GM12878 (cell line): ENCODE measurements at regions of chr2 and their contacts with region 1.

Region 1: DNA sequence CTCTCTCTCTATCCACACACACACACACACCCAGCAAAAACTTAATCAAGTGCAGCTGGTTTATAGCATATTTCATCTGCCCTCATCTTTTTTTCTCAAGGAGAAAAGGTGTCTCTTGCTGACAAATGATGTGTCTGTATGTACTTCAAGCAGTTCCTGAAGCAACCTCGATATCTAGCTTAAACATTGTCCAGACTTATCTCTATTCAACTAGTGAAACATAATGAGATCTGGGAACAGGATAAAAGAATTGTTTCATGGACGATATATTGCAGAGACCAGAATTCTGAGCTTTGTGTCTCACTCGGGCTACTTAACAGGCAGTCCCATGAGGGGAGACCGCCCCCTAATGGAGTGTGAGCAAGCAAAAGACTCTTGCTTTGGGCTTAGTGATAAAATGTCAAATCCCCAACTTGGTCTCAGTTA is 929.2 kb upstream of the SOX11 start:
- DNase-seq: no peak
- ATAC-seq: no peak
- H3K4me3 ChIP-seq: no peak overlapping the region
- H3K27ac ChIP-seq: no peak overlapping the region
- H3K4me1 ChIP-seq: no peaks in the 10 kb centered on the region
- H3K27me3 ChIP-seq: no peaks in the 10 kb centered on the region
- CTCF ChIP-seq: peak in 2 of 3 experiments; percentile 29 to 43; a peak in 3 of 6 replicates
- EP300 ChIP-seq: no peak
- POLR2A ChIP-seq: no peak
- RAD21 ChIP-seq: 0 out of 2 replicates have a peak, but pooled peaks have one; percentile 20

Region 2: DNA sequence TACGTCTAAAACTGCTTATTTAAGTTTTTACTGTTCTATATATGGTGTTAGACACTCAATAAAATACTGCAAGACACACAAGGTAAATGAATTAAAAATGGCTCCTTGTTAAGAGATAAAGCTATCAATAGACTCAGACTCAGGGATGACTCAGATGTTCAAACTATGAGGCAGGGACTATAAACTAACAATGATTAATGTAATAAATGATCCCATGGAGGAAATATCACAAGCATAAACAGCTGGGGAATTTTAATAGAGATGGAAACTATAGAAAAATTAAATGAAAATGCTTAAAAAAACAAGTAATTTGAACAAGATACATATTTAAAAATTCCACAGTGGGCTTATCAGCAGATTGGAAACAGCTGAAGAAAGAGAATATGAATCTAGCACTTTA is 408.8 kb before region 1 on chr2:
- CTCF ChIA-PET with region 1: interaction called, 11 read pairs
- POLR2A ChIA-PET with region 1: no interaction called
- RAD21 ChIA-PET with region 1: no interaction called
- SMC1A ChIA-PET with region 1: interaction called, 4 read pairs
- in situ Hi-C with region 1: no loop called
- intact Hi-C with region 1: no loop called
- DNase-seq: no peak
- ATAC-seq: no peak
- H3K4me3 ChIP-seq: no peak overlapping the region
- H3K27ac ChIP-seq: no peak overlapping the region
- H3K4me1 ChIP-seq: no peaks in the 10 kb centered on the region
- H3K27me3 ChIP-seq: no peaks in the 10 kb centered on the region
- CTCF ChIP-seq: no peak
- EP300 ChIP-seq: no peak
- POLR2A ChIP-seq: no peak
- RAD21 ChIP-seq: no peak

Region 3: DNA sequence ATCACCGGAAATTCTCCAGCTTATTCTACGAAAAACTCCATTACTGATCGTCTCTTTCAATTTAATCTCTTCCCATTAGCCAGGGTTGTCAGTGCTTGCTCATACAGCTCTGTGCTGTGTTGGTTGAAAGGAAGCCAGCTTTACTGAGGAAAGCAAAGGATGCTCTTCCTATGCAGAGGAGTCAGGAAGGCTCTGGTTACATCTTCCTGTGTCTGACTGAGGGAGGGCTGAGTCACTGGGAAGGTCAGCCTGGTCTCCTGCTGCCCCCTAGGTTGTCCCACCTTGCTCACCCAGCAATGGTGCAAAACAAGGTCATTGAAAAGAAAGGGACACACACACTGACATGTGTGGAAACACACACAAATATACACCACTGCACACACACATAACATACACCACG is 84.0 kb before region 1 on chr2:
- CTCF ChIA-PET with region 1: no interaction called
- POLR2A ChIA-PET with region 1: no interaction called
- RAD21 ChIA-PET with region 1: no interaction called
- SMC1A ChIA-PET with region 1: no interaction called
- in situ Hi-C with region 1: no loop called
- intact Hi-C with region 1: no loop called
- DNase-seq: no peak
- ATAC-seq: no peak
- H3K4me3 ChIP-seq: no peak overlapping the region
- H3K27ac ChIP-seq: no peak overlapping the region
- H3K4me1 ChIP-seq: no peaks in the 10 kb centered on the region
- H3K27me3 ChIP-seq: no peaks in the 10 kb centered on the region
- CTCF ChIP-seq: no peak
- EP300 ChIP-seq: no peak
- POLR2A ChIP-seq: no peak
- RAD21 ChIP-seq: no peak

Region 4: GRCh38 chr2:4775668-4776067 is 12.7 kb after region 1 on chr2:
- CTCF ChIA-PET with region 1: no interaction called
- POLR2A ChIA-PET with region 1: no interaction called
- RAD21 ChIA-PET with region 1: no interaction called
- SMC1A ChIA-PET with region 1: no interaction called
- in situ Hi-C with region 1: no loop called
- intact Hi-C with region 1: no loop called
- DNase-seq: no peak
- ATAC-seq: no peak
- H3K4me3 ChIP-seq: no peak overlapping the region
- H3K27ac ChIP-seq: no peak overlapping the region
- H3K4me1 ChIP-seq: no peaks in the 10 kb centered on the region
- H3K27me3 ChIP-seq: no peaks in the 10 kb centered on the region
- CTCF ChIP-seq: no peak
- EP300 ChIP-seq: no peak
- POLR2A ChIP-seq: no peak
- RAD21 ChIP-seq: no peak

Region 5: DNA sequence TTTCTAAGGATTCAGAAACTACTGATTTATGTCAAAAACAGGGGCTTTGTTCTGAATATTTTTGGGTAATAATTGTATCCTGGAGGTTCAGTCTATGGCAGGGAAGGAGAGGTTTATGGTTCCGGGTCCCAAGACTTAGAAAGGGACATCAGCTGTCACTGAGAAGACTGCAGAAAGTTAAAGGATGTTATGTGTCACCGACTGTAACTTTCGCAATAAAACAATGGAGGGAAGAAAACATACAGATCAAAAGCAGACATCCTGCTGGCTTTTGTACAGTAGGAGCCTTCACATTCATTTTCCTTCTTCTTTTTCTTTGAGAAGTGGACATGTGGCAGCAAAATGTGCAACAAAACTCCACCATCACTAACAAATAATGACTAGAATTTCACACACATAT is 28.5 kb after region 1 on chr2:
- CTCF ChIA-PET with region 1: no interaction called
- POLR2A ChIA-PET with region 1: no interaction called
- RAD21 ChIA-PET with region 1: no interaction called
- SMC1A ChIA-PET with region 1: no interaction called
- in situ Hi-C with region 1: no loop called
- intact Hi-C with region 1: no loop called
- DNase-seq: no peak
- ATAC-seq: no peak
- H3K4me3 ChIP-seq: no peak overlapping the region
- H3K27ac ChIP-seq: no peak overlapping the region
- H3K4me1 ChIP-seq: no peaks in the 10 kb centered on the region
- H3K27me3 ChIP-seq: no peaks in the 10 kb centered on the region
- CTCF ChIP-seq: no peak
- EP300 ChIP-seq: no peak
- POLR2A ChIP-seq: no peak
- RAD21 ChIP-seq: no peak